Mammary epithelial cell (primary cell): ENCODE measurements at regions of chr18 and their contacts with region 1.

Region 1: GRCh38 chr18:12838178-12838634 is 45.8 kb downstream of the PTPN2 start:
- DNase-seq: peak; percentile 94
- H3K4me3 ChIP-seq: peak overlapping the region in 1 of 3 experiments; percentile 30
- H3K27ac ChIP-seq: peak overlapping the region; percentile 93
- H3K4me1 ChIP-seq: peaks cover 17% of the 10 kb centered on the region
- H3K27me3 ChIP-seq: no peaks in the 10 kb centered on the region
- CTCF ChIP-seq: no peak

Region 2: DNA sequence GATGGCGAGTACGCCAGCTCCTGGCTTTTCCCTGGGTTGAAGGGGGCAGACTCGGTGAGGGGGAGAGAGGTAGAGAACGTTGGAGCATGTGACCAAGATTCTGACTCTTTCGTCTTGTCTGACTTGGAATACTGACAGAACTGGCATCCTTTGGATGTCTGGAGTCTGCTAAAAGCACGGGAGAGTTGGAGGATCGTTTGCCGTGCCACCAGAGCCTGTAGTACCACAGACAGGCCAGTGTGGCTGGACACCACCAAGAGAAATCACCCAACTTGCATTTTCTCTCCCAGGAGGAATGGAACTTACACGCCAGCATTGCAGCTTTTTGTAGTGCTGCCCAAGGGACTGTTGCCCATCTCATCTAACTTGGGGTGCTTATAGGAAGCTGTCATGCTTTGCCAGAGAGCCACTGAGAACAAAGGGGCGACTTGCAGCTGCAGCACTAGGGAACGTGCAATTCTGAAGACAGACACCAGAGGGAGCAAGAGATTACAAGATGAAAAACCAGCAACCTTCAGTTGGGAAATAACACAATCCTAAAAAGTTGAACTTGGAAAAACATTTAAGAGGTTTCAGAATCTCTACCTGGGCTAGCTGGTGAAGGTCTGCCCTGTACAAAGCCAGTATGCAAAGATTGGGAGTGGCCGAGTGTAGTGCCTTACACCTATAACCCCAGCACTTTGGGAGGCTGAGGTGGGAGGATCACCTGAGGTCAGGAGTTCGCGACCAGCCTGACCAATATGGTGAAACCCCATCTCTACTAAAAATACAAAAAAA is 111.2 kb before region 1 on chr18:
- CTCF ChIA-PET with region 1: no interaction called
- dilution Hi-C with region 1: no loop called
- in situ Hi-C with region 1: no loop called
- intact Hi-C with region 1: no loop called
- DNase-seq: peak; percentile 54
- H3K4me3 ChIP-seq: no peak overlapping the region
- H3K27ac ChIP-seq: no peak overlapping the region
- H3K4me1 ChIP-seq: peaks cover 5% of the 10 kb centered on the region
- H3K27me3 ChIP-seq: no peaks in the 10 kb centered on the region
- CTCF ChIP-seq: peak; percentile 83 to 91

Region 3: GRCh38 chr18:12883684-12884405 is 45.6 kb after region 1 on chr18 and contains the start of gene PTPN2:
- CTCF ChIA-PET with region 1: interaction called, 5 read pairs
- dilution Hi-C with region 1: no loop called
- in situ Hi-C with region 1: no loop called
- intact Hi-C with region 1: loop called (anchors 1 kb)
- DNase-seq: peak; percentile 92
- H3K4me3 ChIP-seq: peak within 1 kb of the TSS; percentile 89 to 97 (median 93)
- H3K27ac ChIP-seq: peak within 1 kb of the TSS; percentile 97
- H3K4me1 ChIP-seq: peaks cover 13% of the 10 kb centered on the region
- H3K27me3 ChIP-seq: no peaks in the 10 kb centered on the region
- CTCF ChIP-seq: no peak
- total RNA-seq, gene PTPN2: 25.3 to 47.0 TPM